HepG2 (cell line): ENCODE measurements at regions of chr3 and their contacts with region 1.

Region 1: GRCh38 chr3:40580494-40581091 is 55.8 kb downstream of the ZNF621 start:
- DNase-seq: peak; percentile 50
- ATAC-seq: peak; percentile 81
- H3K4me3 ChIP-seq: no peak overlapping the region
- H3K27ac ChIP-seq: no peak overlapping the region
- H3K4me1 ChIP-seq: peaks cover 9% of the 10 kb centered on the region; the same call in 1 of the 2 replicates
- H3K27me3 ChIP-seq: peaks cover 2 to 4% of the 10 kb centered on the region in 2 experiments; a peak in 2 of 5 replicates
- CTCF ChIP-seq: peak; percentile 95
- EP300 ChIP-seq: no peak
- POLR2A ChIP-seq: no peak
- RAD21 ChIP-seq: peak; percentile 81

Region 2: DNA sequence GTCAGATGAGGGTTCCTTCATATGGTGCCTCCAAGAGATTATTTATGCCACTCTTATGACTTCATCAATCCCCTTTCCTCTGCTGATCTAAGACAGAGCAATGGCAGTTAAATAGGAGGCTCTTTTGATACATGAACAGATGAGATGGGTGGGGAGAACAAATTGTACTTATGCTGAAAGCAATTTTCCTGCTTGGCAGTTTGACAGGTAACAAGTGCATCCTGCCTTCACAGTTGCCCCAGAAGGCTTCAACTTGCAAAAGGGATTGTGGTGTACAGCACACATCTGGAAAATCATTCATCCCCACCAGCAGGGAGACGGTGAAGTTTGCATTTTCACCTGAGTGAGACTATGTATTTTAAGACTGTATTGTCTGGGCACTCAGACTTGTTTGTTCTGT is 166.3 kb before region 1 on chr3:
- CTCF ChIA-PET with region 1: no interaction called
- POLR2A ChIA-PET with region 1: no interaction called
- in situ Hi-C with region 1: no loop called
- intact Hi-C with region 1: no loop called
- DNase-seq: no peak
- ATAC-seq: no peak
- H3K4me3 ChIP-seq: no peak overlapping the region
- H3K27ac ChIP-seq: no peak overlapping the region
- H3K4me1 ChIP-seq: no peaks in the 10 kb centered on the region
- H3K27me3 ChIP-seq: no peaks in the 10 kb centered on the region; a peak in 1 of 5 replicates
- CTCF ChIP-seq: no peak
- EP300 ChIP-seq: no peak
- POLR2A ChIP-seq: no peak
- RAD21 ChIP-seq: no peak

Region 3: GRCh38 chr3:40615110-40615915 is 34.7 kb after region 1 on chr3:
- CTCF ChIA-PET with region 1: no interaction called
- POLR2A ChIA-PET with region 1: no interaction called
- in situ Hi-C with region 1: no loop called
- intact Hi-C with region 1: no loop called
- DNase-seq: no peak
- ATAC-seq: no peak
- H3K4me3 ChIP-seq: no peak overlapping the region
- H3K27ac ChIP-seq: no peak overlapping the region
- H3K4me1 ChIP-seq: no peaks in the 10 kb centered on the region
- H3K27me3 ChIP-seq: peaks cover 0 to 33% of the 10 kb centered on the region in 2 experiments; a peak in 2 of 5 replicates
- CTCF ChIP-seq: no peak
- EP300 ChIP-seq: no peak
- POLR2A ChIP-seq: no peak
- RAD21 ChIP-seq: no peak

Region 4: DNA sequence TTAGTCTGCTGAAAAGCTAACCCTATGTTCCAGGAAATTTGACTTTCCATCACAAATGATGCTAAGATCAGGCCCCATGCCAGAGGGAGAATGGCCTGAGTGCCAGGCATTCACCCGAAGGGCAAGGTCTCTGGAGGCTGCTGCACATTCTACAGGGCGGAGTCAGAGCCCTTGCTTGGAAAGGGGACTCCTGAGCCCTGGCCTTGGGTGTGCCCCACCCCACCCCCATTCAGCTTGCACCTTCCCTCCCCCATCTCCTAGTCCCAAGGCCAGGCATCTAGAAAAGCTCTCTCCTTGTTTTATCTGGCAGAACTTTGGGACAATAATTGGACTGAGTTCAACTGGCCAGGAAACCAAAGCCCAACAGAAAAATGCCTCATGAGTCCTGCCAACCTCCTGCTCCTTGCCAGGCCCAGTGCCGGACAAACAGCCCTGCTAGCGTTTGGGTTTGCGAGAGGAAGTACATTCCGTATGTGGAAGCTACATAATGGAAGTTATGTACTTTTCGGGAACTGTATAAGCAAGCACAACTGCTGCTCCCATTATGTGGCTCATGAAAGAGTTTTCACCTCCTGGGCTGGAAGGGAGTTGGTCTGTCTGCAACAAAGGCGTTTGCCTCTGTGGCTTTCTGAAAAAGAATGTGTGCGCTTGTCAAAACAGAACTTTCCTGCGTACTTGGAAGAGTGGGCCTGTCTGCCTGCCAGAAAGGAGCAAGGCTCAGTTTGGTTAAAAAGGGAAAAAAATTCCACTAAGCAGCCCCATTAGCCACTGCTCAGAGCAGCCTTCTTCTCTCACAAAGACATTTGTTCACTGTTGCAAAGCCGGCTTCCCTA is 297.3 kb after region 1 on chr3:
- CTCF ChIA-PET with region 1: no interaction called
- POLR2A ChIA-PET with region 1: no interaction called
- in situ Hi-C with region 1: no loop called
- intact Hi-C with region 1: loop called (anchors 10 kb)
- DNase-seq: peak; percentile 12
- ATAC-seq: peak; percentile 29; the same call in 1 of the 3 replicates
- H3K4me3 ChIP-seq: no peak overlapping the region; a peak in 1 of 6 replicates
- H3K27ac ChIP-seq: no peak overlapping the region
- H3K4me1 ChIP-seq: peaks cover 50% of the 10 kb centered on the region
- H3K27me3 ChIP-seq: no peaks in the 10 kb centered on the region
- CTCF ChIP-seq: no peak
- EP300 ChIP-seq: no peak
- POLR2A ChIP-seq: no peak
- RAD21 ChIP-seq: no peak

Region 5: GRCh38 chr3:41716471-41716870 is 1135.9 kb after region 1 on chr3:
- CTCF ChIA-PET with region 1: no interaction called
- POLR2A ChIA-PET with region 1: no interaction called
- in situ Hi-C with region 1: no loop called
- intact Hi-C with region 1: loop called (anchors 10 kb)
- DNase-seq: no peak
- ATAC-seq: no peak
- H3K4me3 ChIP-seq: no peak overlapping the region
- H3K27ac ChIP-seq: no peak overlapping the region
- H3K4me1 ChIP-seq: no peaks in the 10 kb centered on the region
- H3K27me3 ChIP-seq: no peaks in the 10 kb centered on the region
- CTCF ChIP-seq: 0 out of 2 replicates have a peak, but pooled peaks have one; percentile 27
- EP300 ChIP-seq: no peak
- POLR2A ChIP-seq: no peak
- RAD21 ChIP-seq: no peak

Region 6: DNA sequence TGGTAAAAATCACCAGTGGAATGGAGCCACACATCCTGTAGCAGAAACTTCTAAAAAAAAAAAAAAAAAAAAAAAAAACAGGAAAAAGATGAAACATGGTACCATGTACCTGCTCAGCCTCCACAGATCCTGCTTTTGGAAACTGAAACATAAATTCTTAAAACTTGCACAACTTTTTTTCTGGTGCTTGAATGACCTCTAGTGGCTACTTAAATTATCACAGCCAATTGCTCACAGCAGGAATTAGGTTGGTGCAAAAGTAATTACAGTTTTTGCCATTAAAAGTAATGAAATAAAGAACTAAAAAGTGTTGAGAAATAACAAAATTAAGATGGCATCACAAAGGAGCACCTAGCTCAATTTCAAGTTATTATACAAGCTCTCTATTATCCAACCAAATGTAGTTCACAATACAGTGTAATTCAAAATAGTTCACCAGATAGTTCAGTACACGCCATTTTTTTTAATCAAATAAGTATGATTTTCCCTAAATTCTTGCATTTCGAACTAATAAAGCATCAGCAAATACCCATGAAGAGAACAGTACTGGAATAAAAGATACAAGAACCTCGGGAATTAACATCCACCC is 1300.7 kb after region 1 on chr3:
- CTCF ChIA-PET with region 1: interaction called, 16 read pairs
- POLR2A ChIA-PET with region 1: no interaction called
- in situ Hi-C with region 1: loop called (anchors 10 kb)
- intact Hi-C with region 1: loop called (anchors 1 kb)
- DNase-seq: peak; percentile 23
- ATAC-seq: no peak
- H3K4me3 ChIP-seq: no peak overlapping the region
- H3K27ac ChIP-seq: no peak overlapping the region
- H3K4me1 ChIP-seq: no peaks in the 10 kb centered on the region
- H3K27me3 ChIP-seq: no peaks in the 10 kb centered on the region
- CTCF ChIP-seq: peak; percentile 68
- EP300 ChIP-seq: no peak
- POLR2A ChIP-seq: no peak
- RAD21 ChIP-seq: peak; percentile 48; the same call in 1 of the 2 replicates